ENCODE measurements at regions of chr22 and their contacts with region 1.

Region 1: DNA sequence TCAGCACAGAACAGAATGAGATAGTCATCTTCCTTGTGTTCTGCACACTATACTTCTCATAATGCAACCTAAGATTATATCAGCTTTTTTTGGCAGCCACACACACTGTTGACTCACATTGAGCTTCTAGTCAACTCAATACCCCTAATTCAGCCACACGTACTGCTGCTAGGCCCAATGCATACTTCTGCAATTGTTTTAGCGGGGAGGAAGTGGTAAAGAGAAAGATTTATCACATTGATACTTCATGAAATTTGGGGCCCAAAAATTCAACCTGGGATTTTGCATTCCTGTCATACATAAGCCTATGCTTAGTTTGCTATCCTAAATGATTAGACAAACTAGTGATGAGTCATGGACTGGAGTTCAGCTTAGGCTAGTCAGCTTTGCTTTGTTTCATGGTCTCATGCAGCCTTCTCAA is 8.6 kb upstream of the UPB1 start:
- DNase-seq: peak; percentile 62
- ATAC-seq: peak; percentile 96
- H3K4me3 Mint-ChIP-seq: no peak overlapping the region
- H3K27ac Mint-ChIP-seq: peak overlapping the region; percentile 35
- H3K4me1 Mint-ChIP-seq: peaks cover 26% of the 10 kb centered on the region
- H3K27me3 Mint-ChIP-seq: no peaks in the 10 kb centered on the region

Region 2: DNA sequence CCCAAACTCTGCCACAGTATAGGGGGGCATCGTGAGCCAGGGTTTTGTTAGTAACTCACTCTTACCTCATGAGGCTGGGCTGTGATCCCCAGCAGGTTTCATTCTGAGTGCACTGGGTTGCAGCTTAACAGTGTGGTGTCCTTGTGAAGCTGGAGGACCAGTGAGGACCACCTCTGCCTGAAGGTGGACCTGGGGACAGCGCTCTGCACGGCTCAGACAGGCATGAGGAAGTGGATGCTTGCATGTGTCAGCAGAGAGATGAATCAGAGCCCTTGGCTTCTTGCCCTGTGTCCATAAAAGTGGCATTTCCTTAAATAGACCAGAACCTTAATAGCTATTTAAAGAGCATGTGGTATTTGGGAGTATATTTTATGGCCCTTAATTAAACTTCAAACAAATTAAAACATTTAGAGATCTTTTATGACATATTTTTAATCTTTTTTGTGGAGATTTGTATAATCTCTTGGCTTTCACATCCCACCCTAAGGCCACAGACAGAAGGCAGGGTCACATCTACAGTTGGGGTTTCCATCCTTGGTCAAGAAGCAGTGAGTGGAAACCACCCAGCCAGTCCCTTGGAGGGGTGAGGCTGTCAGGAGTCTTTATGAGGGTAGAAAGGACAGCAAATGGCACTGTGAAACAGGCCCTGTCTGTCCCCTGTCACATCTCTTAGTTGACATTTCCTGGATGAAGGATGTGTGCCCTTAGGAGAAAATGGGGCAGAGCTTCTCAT is 83.9 kb before region 1 on chr22:
- CTCF ChIA-PET with region 1: interaction called, 3 read pairs
- POLR2A ChIA-PET with region 1: no interaction called
- intact Hi-C with region 1: loop called (anchors 1 kb)
- DNase-seq: peak; percentile 24
- ATAC-seq: peak; percentile 37
- H3K4me3 Mint-ChIP-seq: no peak overlapping the region
- H3K27ac Mint-ChIP-seq: peak overlapping the region; percentile 25
- H3K4me1 Mint-ChIP-seq: peaks cover 62% of the 10 kb centered on the region
- H3K27me3 Mint-ChIP-seq: no peaks in the 10 kb centered on the region

Region 3: DNA sequence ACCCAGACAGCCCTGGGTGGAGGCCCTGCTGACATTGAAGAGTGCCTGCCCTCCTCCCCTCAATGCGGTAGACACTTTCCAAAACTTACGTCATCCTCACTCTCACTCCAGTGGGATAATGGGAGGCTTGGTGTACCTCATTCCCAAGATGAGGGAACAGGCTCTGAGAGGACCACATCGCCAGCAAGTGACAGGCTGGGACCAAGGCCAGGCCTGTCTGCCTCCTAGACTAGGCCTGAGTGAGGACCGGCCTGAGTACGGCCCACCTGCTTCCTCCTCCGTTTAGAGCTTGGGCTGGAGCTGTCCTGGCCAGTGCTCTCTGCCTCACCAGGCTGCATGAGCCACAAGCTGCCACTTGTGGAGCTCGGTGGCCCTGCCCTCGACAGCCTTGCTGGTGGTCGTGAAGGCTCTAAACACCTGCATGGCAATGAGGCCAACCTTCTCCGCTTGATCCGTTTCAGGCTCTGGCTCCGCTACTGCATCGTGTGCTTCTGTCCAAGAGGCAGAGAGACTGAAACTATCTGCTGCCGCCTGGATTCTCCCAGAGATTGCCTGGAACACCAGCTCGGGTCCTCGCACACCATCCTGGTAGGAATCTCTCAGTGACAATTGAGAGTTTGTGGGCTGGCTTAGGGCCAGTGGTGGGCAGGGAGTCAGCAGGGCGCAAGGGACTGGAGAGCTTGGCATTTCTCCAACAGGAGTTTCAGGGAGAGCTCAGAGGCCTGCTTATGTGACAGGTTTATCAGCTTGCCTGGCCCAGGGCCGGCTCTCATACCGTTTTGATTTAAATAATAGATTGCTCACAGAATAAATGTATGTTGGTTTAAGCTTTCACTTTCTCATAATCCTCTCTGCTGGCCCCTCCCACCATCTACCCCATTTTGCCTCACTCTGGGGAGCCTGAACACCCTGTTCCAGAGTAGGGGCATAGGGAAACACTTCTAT is 97.0 kb after region 1 on chr22:
- CTCF ChIA-PET with region 1: no interaction called
- POLR2A ChIA-PET with region 1: no interaction called
- intact Hi-C with region 1: no loop called
- DNase-seq: no peak
- ATAC-seq: no peak
- H3K4me3 Mint-ChIP-seq: no peak overlapping the region
- H3K27ac Mint-ChIP-seq: no peak overlapping the region
- H3K4me1 Mint-ChIP-seq: no peaks in the 10 kb centered on the region
- H3K27me3 Mint-ChIP-seq: no peaks in the 10 kb centered on the region

Region 4: GRCh38 chr22:24758164-24758799 is 271.8 kb after region 1 on chr22:
- CTCF ChIA-PET with region 1: no interaction called
- POLR2A ChIA-PET with region 1: no interaction called
- intact Hi-C with region 1: no loop called
- DNase-seq: peak; percentile 76
- ATAC-seq: no peak
- H3K4me3 Mint-ChIP-seq: no peak overlapping the region
- H3K27ac Mint-ChIP-seq: no peak overlapping the region
- H3K4me1 Mint-ChIP-seq: no peaks in the 10 kb centered on the region
- H3K27me3 Mint-ChIP-seq: no peaks in the 10 kb centered on the region

Measured in activated CD4-positive, alpha-beta T cell treated with anti-CD3 and anti-CD28 coated beads for 36 hours (primary cell).